ENCODE measurements at regions of chr3 and their contacts with region 1.

Region 1: GRCh38 chr3:51498876-51499738 is 708 bp downstream of the DCAF1 start:
- DNase-seq: peak; percentile 96
- H3K4me3 Mint-ChIP-seq: peak overlapping the region; percentile 88
- H3K27ac Mint-ChIP-seq: peak overlapping the region; percentile 98
- H3K4me1 Mint-ChIP-seq: peaks cover 8% of the 10 kb centered on the region
- H3K27me3 Mint-ChIP-seq: no peaks in the 10 kb centered on the region
- CTCF ChIP-seq: no peak

Region 2: GRCh38 chr3:51304230-51304629 is 194.9 kb before region 1 on chr3:
- CTCF ChIA-PET with region 1: no interaction called
- POLR2A ChIA-PET with region 1: no interaction called
- intact Hi-C with region 1: no loop called
- DNase-seq: no peak
- H3K4me3 Mint-ChIP-seq: no peak overlapping the region
- H3K27ac Mint-ChIP-seq: no peak overlapping the region
- H3K4me1 Mint-ChIP-seq: no peaks in the 10 kb centered on the region
- H3K27me3 Mint-ChIP-seq: peaks cover 41% of the 10 kb centered on the region
- CTCF ChIP-seq: no peak

Region 3: GRCh38 chr3:51384726-51385473 is 114.2 kb before region 1 on chr3 and contains the start of gene MANF:
- CTCF ChIA-PET with region 1: interaction called, 31 read pairs
- POLR2A ChIA-PET with region 1: interaction called, 25 read pairs
- intact Hi-C with region 1: loop called (anchors 2 kb)
- DNase-seq: peak; percentile 98
- H3K4me3 Mint-ChIP-seq: peak within 1 kb of the TSS; percentile 90
- H3K27ac Mint-ChIP-seq: peak within 1 kb of the TSS; percentile 98
- H3K4me1 Mint-ChIP-seq: peaks cover 26% of the 10 kb centered on the region
- H3K27me3 Mint-ChIP-seq: no peaks in the 10 kb centered on the region
- CTCF ChIP-seq: no peak
- total RNA-seq, gene MANF: 271 and 273 TPM in 2 replicates

Region 4: DNA sequence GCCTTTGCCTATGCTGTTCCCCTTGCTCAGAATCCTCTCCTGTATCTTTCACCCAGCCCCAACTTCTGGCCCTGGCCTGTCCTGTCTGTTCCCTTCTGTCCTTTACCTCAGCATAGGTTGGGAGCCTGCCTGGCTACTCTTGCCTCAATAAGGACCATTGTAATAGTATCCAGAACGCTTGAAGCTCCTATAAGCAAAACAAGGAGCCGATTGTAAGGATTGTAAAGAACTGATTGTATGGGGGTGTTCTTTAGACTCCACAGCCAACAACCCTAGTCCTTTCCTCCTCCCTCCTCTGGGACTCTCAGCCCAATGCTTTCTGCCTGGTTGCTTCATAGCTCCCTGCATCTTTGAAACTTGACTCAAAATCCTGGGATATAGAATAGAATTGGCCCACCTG is 20.7 kb after region 1 on chr3:
- CTCF ChIA-PET with region 1: interaction called, 15 read pairs
- POLR2A ChIA-PET with region 1: no interaction called
- intact Hi-C with region 1: no loop called
- DNase-seq: no peak
- H3K4me3 Mint-ChIP-seq: no peak overlapping the region
- H3K27ac Mint-ChIP-seq: no peak overlapping the region
- H3K4me1 Mint-ChIP-seq: no peaks in the 10 kb centered on the region
- H3K27me3 Mint-ChIP-seq: no peaks in the 10 kb centered on the region
- CTCF ChIP-seq: no peak

Region 5: GRCh38 chr3:51581529-51581928 is 82.4 kb after region 1 on chr3:
- CTCF ChIA-PET with region 1: interaction called, 13 read pairs
- POLR2A ChIA-PET with region 1: no interaction called
- intact Hi-C with region 1: no loop called
- DNase-seq: peak; percentile 5
- H3K4me3 Mint-ChIP-seq: no peak overlapping the region
- H3K27ac Mint-ChIP-seq: no peak overlapping the region
- H3K4me1 Mint-ChIP-seq: no peaks in the 10 kb centered on the region
- H3K27me3 Mint-ChIP-seq: no peaks in the 10 kb centered on the region
- CTCF ChIP-seq: no peak

Region 6: GRCh38 chr3:51637941-51638471 is 138.9 kb after region 1 on chr3:
- CTCF ChIA-PET with region 1: interaction called, 39 read pairs
- POLR2A ChIA-PET with region 1: interaction called, 7 read pairs
- intact Hi-C with region 1: loop called (anchors 1 kb)
- DNase-seq: peak; percentile 72
- H3K4me3 Mint-ChIP-seq: no peak overlapping the region
- H3K27ac Mint-ChIP-seq: no peak overlapping the region
- H3K4me1 Mint-ChIP-seq: no peaks in the 10 kb centered on the region
- H3K27me3 Mint-ChIP-seq: no peaks in the 10 kb centered on the region
- CTCF ChIP-seq: peak; percentile 84

Region 7: GRCh38 chr3:51682079-51682478 is 183.0 kb after region 1 on chr3:
- CTCF ChIA-PET with region 1: interaction called, 111 read pairs
- POLR2A ChIA-PET with region 1: interaction called, 38 read pairs
- intact Hi-C with region 1: loop called (anchors 1 kb)
- DNase-seq: peak; percentile 91
- H3K4me3 Mint-ChIP-seq: no peak overlapping the region
- H3K27ac Mint-ChIP-seq: peak overlapping the region; percentile 35
- H3K4me1 Mint-ChIP-seq: peaks cover 42% of the 10 kb centered on the region
- H3K27me3 Mint-ChIP-seq: no peaks in the 10 kb centered on the region
- CTCF ChIP-seq: peak; percentile 65

Region 8: DNA sequence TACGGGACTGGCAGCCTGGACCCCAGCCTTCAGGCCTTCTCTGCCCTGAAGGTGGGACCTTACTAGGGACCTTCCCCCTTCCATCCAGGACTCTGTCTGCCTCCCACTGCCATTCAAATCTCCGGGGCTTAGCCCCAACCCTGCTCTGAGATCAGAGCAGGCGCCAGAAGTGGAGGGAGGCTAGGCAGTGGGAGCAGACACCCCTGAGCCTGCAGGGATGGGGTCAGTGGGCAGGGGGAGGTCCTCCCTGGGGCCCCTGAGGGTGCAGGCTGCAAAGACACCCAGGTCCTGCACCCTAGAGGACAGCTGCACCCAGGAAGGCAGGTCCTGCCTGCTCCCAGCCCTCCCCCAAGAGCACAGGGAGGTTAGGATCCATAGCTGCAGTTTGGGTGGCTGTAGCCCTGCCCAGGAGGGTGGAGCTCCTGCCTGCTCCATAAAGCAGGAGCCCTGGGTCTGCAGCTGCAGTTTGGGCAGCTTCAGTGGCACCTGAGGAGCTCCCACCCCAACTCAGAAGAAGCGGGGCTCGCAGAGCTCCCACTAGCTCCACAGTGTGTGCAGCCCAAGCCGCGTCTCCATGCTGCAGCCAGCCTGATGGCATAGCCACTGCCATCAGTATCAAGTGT is 663.3 kb after region 1 on chr3:
- CTCF ChIA-PET with region 1: no interaction called
- POLR2A ChIA-PET with region 1: no interaction called
- intact Hi-C with region 1: no loop called
- DNase-seq: no peak
- H3K4me3 Mint-ChIP-seq: no peak overlapping the region
- H3K27ac Mint-ChIP-seq: no peak overlapping the region
- H3K4me1 Mint-ChIP-seq: no peaks in the 10 kb centered on the region
- H3K27me3 Mint-ChIP-seq: no peaks in the 10 kb centered on the region
- CTCF ChIP-seq: no peak

Measured in MCF 10A (cell line).